ENCODE measurements at regions of chr1 and their contacts with region 1.

Region 1: DNA sequence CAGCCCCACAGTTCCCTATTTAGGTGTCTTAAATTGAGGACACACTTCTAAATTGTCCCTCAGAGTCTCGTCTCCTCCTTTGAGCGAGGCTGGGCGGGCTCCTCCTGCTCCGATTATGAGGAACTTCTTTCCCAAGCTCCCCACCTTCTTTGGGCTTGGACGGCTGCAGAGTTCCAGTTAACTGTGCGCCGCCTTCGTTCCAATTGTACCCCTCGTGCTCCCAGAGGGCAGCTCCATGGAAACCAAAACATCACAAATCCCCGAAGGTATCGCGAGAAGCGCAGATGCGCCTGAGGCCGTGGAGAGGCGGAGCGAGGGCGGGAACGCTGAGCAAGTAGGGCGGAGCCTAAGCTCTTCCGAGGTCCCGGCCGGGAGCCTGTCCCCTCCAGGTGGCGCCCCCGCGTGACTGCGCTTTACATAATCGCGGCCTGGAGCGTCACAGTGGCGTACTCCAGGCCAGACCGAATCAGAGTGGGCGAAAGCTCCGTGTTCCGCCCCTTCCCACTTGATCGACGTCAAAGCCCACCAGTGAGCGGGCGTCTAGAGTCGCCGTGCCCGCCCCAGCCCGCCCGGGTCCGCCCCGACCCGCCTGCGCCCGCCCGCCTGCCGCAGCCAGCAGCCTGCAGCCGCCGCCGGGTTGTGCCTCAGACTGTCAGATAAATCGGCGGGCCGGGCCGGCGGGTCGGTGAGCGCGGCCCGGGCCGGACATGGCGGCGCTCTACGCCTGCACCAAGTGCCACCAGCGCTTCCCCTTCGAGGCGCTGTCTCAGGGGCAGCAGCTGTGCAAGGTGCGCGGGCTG is at the start of gene FAM76A:
- DNase-seq: peak; percentile 97
- ATAC-seq: peak; percentile 94
- H3K4me3 ChIP-seq: peak within 1 kb of the TSS; percentile 84 to 99 (median 91)
- H3K27ac ChIP-seq: peak within 1 kb of the TSS; percentile 99
- H3K4me1 ChIP-seq: peaks cover 33% of the 10 kb centered on the region
- H3K27me3 ChIP-seq: no peaks in the 10 kb centered on the region
- CTCF ChIP-seq: peak; percentile 92
- EP300 ChIP-seq: peak in 1 of 2 experiments; percentile 31; a peak in 1 of 4 replicates
- POLR2A ChIP-seq: peak; percentile 57 to 70
- RAD21 ChIP-seq: 0 out of 2 replicates have a peak, but pooled peaks have one; percentile 1
- total RNA-seq, gene FAM76A: 15.7 and 18.8 TPM in 2 replicates

Region 2: DNA sequence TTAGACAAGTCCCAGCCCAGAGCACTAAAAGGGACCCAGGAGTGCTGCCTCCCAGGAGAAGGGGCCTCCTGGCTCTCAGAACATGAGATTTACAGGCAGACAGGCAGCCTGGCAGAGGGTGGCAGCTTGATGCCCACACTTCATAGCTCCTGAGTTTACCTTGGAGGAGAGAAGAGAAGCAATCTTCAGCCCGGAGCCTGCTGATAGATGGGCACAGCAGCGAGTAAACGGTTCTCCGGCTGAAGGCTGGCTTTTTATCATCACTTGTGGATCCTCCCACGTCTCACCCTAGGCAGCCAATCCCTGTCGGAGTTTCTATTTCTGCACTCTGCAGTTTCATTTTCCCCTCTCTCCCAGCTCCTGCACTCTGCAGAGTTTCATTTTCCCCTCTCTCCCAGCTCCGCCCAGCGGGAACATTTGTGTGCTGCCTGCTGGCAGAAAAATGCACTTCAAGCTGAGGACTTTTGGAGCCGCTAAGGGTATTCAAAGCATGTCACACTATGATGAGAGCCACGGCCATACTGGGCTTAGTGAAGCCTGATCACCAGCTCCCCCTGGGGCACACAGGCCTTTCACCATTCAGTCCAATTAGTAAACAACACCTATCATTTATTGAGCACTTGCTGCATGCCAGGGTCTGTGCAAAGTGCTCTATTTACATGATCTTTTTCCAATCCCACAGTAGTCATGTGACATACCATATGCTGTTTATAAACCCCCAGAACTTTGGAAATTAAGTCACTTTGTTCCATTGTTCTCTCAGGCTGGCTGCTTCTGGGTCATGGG is 53.4 kb before region 1 on chr1 and contains the start of gene IFI6:
- CTCF ChIA-PET with region 1: no interaction called
- POLR2A ChIA-PET with region 1: interaction called, 21 read pairs
- in situ Hi-C with region 1: loop called (anchors 5 kb)
- intact Hi-C with region 1: no loop called
- DNase-seq: peak; percentile 96
- ATAC-seq: peak; percentile 98
- H3K4me3 ChIP-seq: peak within 1 kb of the TSS; percentile 48 to 70 (median 61)
- H3K27ac ChIP-seq: peak within 1 kb of the TSS; percentile 58
- H3K4me1 ChIP-seq: peaks cover 40% of the 10 kb centered on the region
- H3K27me3 ChIP-seq: no peaks in the 10 kb centered on the region
- CTCF ChIP-seq: peak; percentile 50
- EP300 ChIP-seq: no peak
- POLR2A ChIP-seq: peak; percentile 56 to 73
- RAD21 ChIP-seq: peak; percentile 29; the same call in 1 of the 2 replicates
- total RNA-seq, gene IFI6: 6.1 and 13.2 TPM in 2 replicates

Region 3: DNA sequence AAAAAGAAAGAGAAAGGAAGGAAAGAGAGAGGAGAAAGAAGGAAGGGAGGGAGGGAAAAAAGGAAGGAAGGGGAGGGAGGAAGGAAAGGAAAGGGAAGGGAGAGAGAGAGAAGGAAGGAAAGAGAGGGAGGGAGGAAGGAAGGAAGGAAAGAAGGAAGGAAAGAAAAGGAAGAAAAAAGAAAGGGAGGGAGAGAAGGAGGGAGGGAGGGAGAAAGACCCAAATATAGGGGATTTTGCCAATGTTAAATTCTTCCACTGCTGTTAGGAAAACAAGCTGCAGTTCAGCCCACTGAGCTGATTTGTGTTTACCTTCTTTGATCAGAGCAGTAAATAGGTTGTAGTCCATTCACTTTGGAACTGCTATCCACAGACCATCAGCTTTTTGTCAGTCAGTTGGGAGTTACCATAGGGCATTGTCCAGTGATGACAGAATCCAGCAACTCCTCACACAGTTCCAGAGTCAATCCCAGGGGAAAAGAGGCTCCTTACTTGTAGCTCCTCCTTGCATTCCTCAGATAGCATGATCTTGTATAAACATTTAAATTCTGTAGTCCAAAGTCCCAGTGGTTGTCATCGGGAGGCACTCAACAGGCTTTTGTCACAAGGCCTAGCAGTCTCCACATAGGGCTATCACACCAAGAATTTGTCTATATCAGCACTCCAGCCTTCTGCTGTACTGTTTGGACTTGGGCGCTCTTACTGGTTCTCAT is 91.5 kb after region 1 on chr1:
- CTCF ChIA-PET with region 1: no interaction called
- POLR2A ChIA-PET with region 1: interaction called, 13 read pairs
- in situ Hi-C with region 1: no loop called
- intact Hi-C with region 1: no loop called
- DNase-seq: peak; percentile 98
- ATAC-seq: peak; percentile 99
- H3K4me3 ChIP-seq: peak overlapping the region in 1 of 3 experiments; percentile 35; a peak in 1 of 6 replicates
- H3K27ac ChIP-seq: peak overlapping the region; percentile 91
- H3K4me1 ChIP-seq: peaks cover 31% of the 10 kb centered on the region
- H3K27me3 ChIP-seq: no peaks in the 10 kb centered on the region
- CTCF ChIP-seq: no peak
- EP300 ChIP-seq: peak in 1 of 2 experiments; percentile 54; a peak in 2 of 4 replicates
- POLR2A ChIP-seq: peak in 1 of 2 experiments; percentile 47; a peak in 1 of 4 replicates
- RAD21 ChIP-seq: no peak